ENCODE measurements at regions of chr1 and their contacts with region 1.

Region 1: GRCh38 chr1:244451951-244452795 is 464 bp upstream of the ADSS2 start:
- DNase-seq: peak; percentile 98
- H3K4me3 Mint-ChIP-seq: peak overlapping the region; percentile 95
- H3K27ac Mint-ChIP-seq: peak overlapping the region; percentile 96
- H3K4me1 Mint-ChIP-seq: peaks cover 34% of the 10 kb centered on the region
- H3K27me3 Mint-ChIP-seq: no peaks in the 10 kb centered on the region

Region 2: GRCh38 chr1:244435562-244436205 is 16.5 kb before region 1 on chr1:
- intact Hi-C with region 1: loop called (anchors 1 kb)
- DNase-seq: no peak
- H3K4me3 Mint-ChIP-seq: peak overlapping the region; percentile 26
- H3K27ac Mint-ChIP-seq: peak overlapping the region; percentile 93
- H3K4me1 Mint-ChIP-seq: peaks cover 31% of the 10 kb centered on the region
- H3K27me3 Mint-ChIP-seq: no peaks in the 10 kb centered on the region

Region 3: GRCh38 chr1:244590670-244591069 is 138.5 kb after region 1 on chr1:
- intact Hi-C with region 1: no loop called
- DNase-seq: no peak
- H3K4me3 Mint-ChIP-seq: no peak overlapping the region
- H3K27ac Mint-ChIP-seq: no peak overlapping the region
- H3K4me1 Mint-ChIP-seq: peaks cover 8% of the 10 kb centered on the region
- H3K27me3 Mint-ChIP-seq: peaks cover 2% of the 10 kb centered on the region

Region 4: GRCh38 chr1:244652699-244653466 is 200.7 kb after region 1 on chr1 and contains the start of gene DESI2:
- intact Hi-C with region 1: loop called (anchors 1 kb)
- DNase-seq: peak; percentile 98
- H3K4me3 Mint-ChIP-seq: peak within 1 kb of the TSS; percentile 82
- H3K27ac Mint-ChIP-seq: peak within 1 kb of the TSS; percentile 71
- H3K4me1 Mint-ChIP-seq: peaks cover 20% of the 10 kb centered on the region
- H3K27me3 Mint-ChIP-seq: peaks cover 1% of the 10 kb centered on the region
- total RNA-seq, gene DESI2: 27.4 TPM in 2 replicates

Region 5: GRCh38 chr1:244735404-244735803 is 283.2 kb after region 1 on chr1:
- intact Hi-C with region 1: no loop called
- DNase-seq: no peak
- H3K4me3 Mint-ChIP-seq: no peak overlapping the region
- H3K27ac Mint-ChIP-seq: no peak overlapping the region
- H3K4me1 Mint-ChIP-seq: no peaks in the 10 kb centered on the region
- H3K27me3 Mint-ChIP-seq: peaks cover 23% of the 10 kb centered on the region

Measured in activated T-helper 2 cell treated with anti-CD3 and anti-CD28 coated beads, Interferon-gamma antibody, Interleukin-2, Interleukin-4, amounts not matched to agents 10 μg/mL and 5 μg/mL and 100 μg/mL, durations not matched to agents 14 hours and 24 hours and 36 hours (primary cell).